Activated CD4-positive, alpha-beta memory T cell treated with anti-CD3 and anti-CD28 coated beads for 36 hours (primary cell): ENCODE measurements at regions of chr15 and their contacts with region 1.

Region 1: DNA sequence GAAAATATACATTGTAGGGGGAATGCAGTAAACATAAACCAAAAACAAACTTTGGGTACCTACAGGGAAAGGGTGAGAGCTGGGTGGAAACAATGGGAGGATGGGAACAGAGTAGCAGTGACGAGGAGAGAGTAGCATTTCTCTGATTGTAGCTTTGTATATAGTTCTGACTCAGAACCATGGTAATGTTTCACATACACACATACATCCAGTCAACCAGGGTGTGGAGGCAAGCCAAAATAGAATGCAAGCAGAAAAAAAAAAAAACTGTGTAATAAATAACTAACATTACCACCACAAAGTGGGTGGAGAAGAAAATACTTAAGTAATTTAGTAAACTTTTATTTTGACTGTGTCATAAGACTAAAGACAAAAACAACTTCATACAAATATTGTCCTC is 27.2 kb downstream of the BCL2A1 start:
- DNase-seq: no peak
- H3K4me3 Mint-ChIP-seq: no peak overlapping the region
- H3K27ac Mint-ChIP-seq: peak overlapping the region; percentile 35
- H3K4me1 Mint-ChIP-seq: peaks cover 23% of the 10 kb centered on the region
- H3K27me3 Mint-ChIP-seq: no peaks in the 10 kb centered on the region

Region 2: GRCh38 chr15:79957741-79958140 is 13.9 kb after region 1 on chr15:
- CTCF ChIA-PET with region 1: no interaction called
- POLR2A ChIA-PET with region 1: no interaction called
- intact Hi-C with region 1: loop called (anchors 1 kb)
- DNase-seq: no peak
- H3K4me3 Mint-ChIP-seq: no peak overlapping the region
- H3K27ac Mint-ChIP-seq: no peak overlapping the region
- H3K4me1 Mint-ChIP-seq: peaks cover 51% of the 10 kb centered on the region
- H3K27me3 Mint-ChIP-seq: no peaks in the 10 kb centered on the region